GM12878 (cell line): ENCODE measurements at regions of chr7 and their contacts with region 1.

Region 1: GRCh38 chr7:130242198-130243014 is 24.3 kb upstream of the CPA2 start:
- DNase-seq: peak; percentile 17
- ATAC-seq: peak; percentile 99
- H3K4me3 ChIP-seq: no peak overlapping the region
- H3K27ac ChIP-seq: no peak overlapping the region
- H3K4me1 ChIP-seq: no peaks in the 10 kb centered on the region
- H3K27me3 ChIP-seq: no peaks in the 10 kb centered on the region
- CTCF ChIP-seq: peak; percentile 77 to 94 (median 85)
- EP300 ChIP-seq: no peak
- POLR2A ChIP-seq: no peak
- RAD21 ChIP-seq: peak; percentile 96

Region 2: GRCh38 chr7:130254555-130254954 is 12.1 kb after region 1 on chr7:
- CTCF ChIA-PET with region 1: interaction called, 6 read pairs
- POLR2A ChIA-PET with region 1: interaction called, 3 read pairs
- RAD21 ChIA-PET with region 1: no interaction called
- SMC1A ChIA-PET with region 1: interaction called, 4 read pairs
- in situ Hi-C with region 1: no loop called
- intact Hi-C with region 1: loop called (anchors 1 kb)
- DNase-seq: no peak
- ATAC-seq: no peak
- H3K4me3 ChIP-seq: no peak overlapping the region
- H3K27ac ChIP-seq: no peak overlapping the region
- H3K4me1 ChIP-seq: no peaks in the 10 kb centered on the region
- H3K27me3 ChIP-seq: no peaks in the 10 kb centered on the region
- CTCF ChIP-seq: no peak
- EP300 ChIP-seq: no peak
- POLR2A ChIP-seq: no peak
- RAD21 ChIP-seq: no peak

Region 3: DNA sequence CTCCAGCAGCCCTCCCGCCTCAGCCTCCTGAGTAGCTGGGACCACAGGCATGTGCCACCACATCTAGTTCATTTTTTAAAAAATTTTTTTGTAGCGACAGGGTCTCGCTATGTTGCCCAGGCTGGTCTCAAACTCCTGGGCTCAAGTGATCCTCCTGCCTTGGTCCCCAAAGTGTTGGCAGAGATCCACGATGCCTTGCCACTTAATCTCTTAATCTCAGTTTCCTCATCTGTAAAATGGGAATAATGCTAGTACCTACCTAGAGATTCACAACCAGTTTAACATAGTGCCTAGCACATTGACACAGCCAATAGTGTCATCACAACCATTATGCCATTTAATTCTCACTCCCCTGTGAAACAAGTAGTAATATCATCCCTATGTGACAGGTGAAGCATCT is 45.8 kb after region 1 on chr7:
- CTCF ChIA-PET with region 1: no interaction called
- POLR2A ChIA-PET with region 1: no interaction called
- RAD21 ChIA-PET with region 1: no interaction called
- SMC1A ChIA-PET with region 1: no interaction called
- in situ Hi-C with region 1: no loop called
- intact Hi-C with region 1: no loop called
- DNase-seq: no peak
- ATAC-seq: no peak
- H3K4me3 ChIP-seq: no peak overlapping the region
- H3K27ac ChIP-seq: no peak overlapping the region
- H3K4me1 ChIP-seq: no peaks in the 10 kb centered on the region
- H3K27me3 ChIP-seq: no peaks in the 10 kb centered on the region
- CTCF ChIP-seq: no peak
- EP300 ChIP-seq: no peak
- POLR2A ChIP-seq: no peak
- RAD21 ChIP-seq: no peak

Region 4: GRCh38 chr7:130365511-130366441 is 123.4 kb after region 1 on chr7:
- CTCF ChIA-PET with region 1: interaction called, 3 read pairs
- POLR2A ChIA-PET with region 1: no interaction called
- RAD21 ChIA-PET with region 1: no interaction called
- SMC1A ChIA-PET with region 1: no interaction called
- in situ Hi-C with region 1: no loop called
- intact Hi-C with region 1: loop called (anchors 5 kb)
- DNase-seq: peak; percentile 51
- ATAC-seq: peak; percentile 87
- H3K4me3 ChIP-seq: no peak overlapping the region
- H3K27ac ChIP-seq: peak overlapping the region; percentile 69
- H3K4me1 ChIP-seq: peaks cover 13% of the 10 kb centered on the region
- H3K27me3 ChIP-seq: no peaks in the 10 kb centered on the region
- CTCF ChIP-seq: no peak
- EP300 ChIP-seq: peak in 1 of 2 experiments; percentile 76; a peak in 2 of 4 replicates
- POLR2A ChIP-seq: peak; percentile 58; the same call in 1 of the 2 replicates
- RAD21 ChIP-seq: no peak

Region 5: GRCh38 chr7:130486114-130486958 is 243.9 kb after region 1 on chr7:
- CTCF ChIA-PET with region 1: interaction called, 5 read pairs
- POLR2A ChIA-PET with region 1: no interaction called
- RAD21 ChIA-PET with region 1: interaction called, 4 read pairs
- SMC1A ChIA-PET with region 1: interaction called, 3 read pairs
- in situ Hi-C with region 1: no loop called
- intact Hi-C with region 1: loop called (anchors 5 kb)
- DNase-seq: no peak
- ATAC-seq: peak; percentile 88
- H3K4me3 ChIP-seq: peak overlapping the region; percentile 48
- H3K27ac ChIP-seq: no peak overlapping the region
- H3K4me1 ChIP-seq: peaks cover 11% of the 10 kb centered on the region
- H3K27me3 ChIP-seq: no peaks in the 10 kb centered on the region; a peak in 1 of 4 replicates
- CTCF ChIP-seq: peak; percentile 58 to 77 (median 70)
- EP300 ChIP-seq: no peak
- POLR2A ChIP-seq: no peak
- RAD21 ChIP-seq: peak; percentile 64

Region 6: GRCh38 chr7:130649004-130649790 is 406.8 kb after region 1 on chr7:
- CTCF ChIA-PET with region 1: no interaction called
- POLR2A ChIA-PET with region 1: no interaction called
- RAD21 ChIA-PET with region 1: no interaction called
- SMC1A ChIA-PET with region 1: no interaction called
- in situ Hi-C with region 1: no loop called
- intact Hi-C with region 1: no loop called
- DNase-seq: peak; percentile 63
- ATAC-seq: peak; percentile 88
- H3K4me3 ChIP-seq: no peak overlapping the region
- H3K27ac ChIP-seq: peak overlapping the region; percentile 85
- H3K4me1 ChIP-seq: peaks cover 16% of the 10 kb centered on the region; the same call in 1 of the 2 replicates
- H3K27me3 ChIP-seq: no peaks in the 10 kb centered on the region
- CTCF ChIP-seq: no peak
- EP300 ChIP-seq: no peak
- POLR2A ChIP-seq: no peak
- RAD21 ChIP-seq: no peak

Region 7: GRCh38 chr7:130695840-130696239 is 453.4 kb after region 1 on chr7:
- CTCF ChIA-PET with region 1: interaction called, 4 read pairs
- POLR2A ChIA-PET with region 1: no interaction called
- RAD21 ChIA-PET with region 1: no interaction called
- SMC1A ChIA-PET with region 1: interaction called, 3 read pairs
- in situ Hi-C with region 1: no loop called
- intact Hi-C with region 1: loop called (anchors 5 kb)
- DNase-seq: no peak
- ATAC-seq: peak; percentile 47; the same call in 1 of the 3 replicates
- H3K4me3 ChIP-seq: no peak overlapping the region
- H3K27ac ChIP-seq: no peak overlapping the region
- H3K4me1 ChIP-seq: no peaks in the 10 kb centered on the region
- H3K27me3 ChIP-seq: no peaks in the 10 kb centered on the region
- CTCF ChIP-seq: peak; percentile 44 to 60 (median 45)
- EP300 ChIP-seq: no peak
- POLR2A ChIP-seq: no peak
- RAD21 ChIP-seq: peak; percentile 63; the same call in 1 of the 2 replicates

Region 8: DNA sequence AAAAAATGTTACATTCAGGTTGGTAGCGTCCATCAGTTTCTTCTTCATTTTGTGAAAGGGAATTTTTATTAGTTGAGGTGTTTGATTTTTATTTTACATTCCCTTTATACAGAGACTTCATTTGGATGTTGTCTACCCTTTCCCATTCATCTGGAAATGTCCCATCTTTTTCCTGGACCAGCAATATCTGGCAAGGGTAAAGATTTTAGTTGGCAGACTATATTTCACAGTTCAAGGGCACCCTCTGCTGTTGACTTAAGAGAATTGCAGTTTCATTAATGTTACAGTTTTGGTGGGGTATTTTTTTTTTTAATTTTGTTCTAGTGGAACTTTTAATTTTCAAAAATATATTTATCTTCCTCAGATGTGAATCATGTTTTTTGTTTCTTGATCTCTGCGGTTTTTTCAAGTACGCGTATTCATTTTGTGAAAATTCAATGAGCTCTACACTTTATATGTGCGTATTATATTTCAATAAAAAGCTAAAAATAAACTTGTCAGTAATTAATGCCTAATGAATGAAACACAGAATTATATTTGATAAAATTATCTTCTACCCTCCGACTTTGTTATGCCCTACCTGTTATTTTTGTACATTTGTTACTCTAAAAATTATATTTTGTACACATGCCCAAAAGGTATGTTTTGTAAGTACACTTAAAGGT is 589.5 kb after region 1 on chr7:
- CTCF ChIA-PET with region 1: interaction called, 11 read pairs
- POLR2A ChIA-PET with region 1: no interaction called
- RAD21 ChIA-PET with region 1: no interaction called
- SMC1A ChIA-PET with region 1: interaction called, 3 read pairs
- in situ Hi-C with region 1: no loop called
- intact Hi-C with region 1: loop called (anchors 5 kb)
- DNase-seq: no peak
- ATAC-seq: no peak
- H3K4me3 ChIP-seq: no peak overlapping the region
- H3K27ac ChIP-seq: no peak overlapping the region
- H3K4me1 ChIP-seq: no peaks in the 10 kb centered on the region
- H3K27me3 ChIP-seq: no peaks in the 10 kb centered on the region
- CTCF ChIP-seq: peak; percentile 58 to 68 (median 68)
- EP300 ChIP-seq: no peak
- POLR2A ChIP-seq: no peak
- RAD21 ChIP-seq: peak; percentile 88